ENCODE measurements at regions of chr11 and their contacts with region 1.

Region 1: DNA sequence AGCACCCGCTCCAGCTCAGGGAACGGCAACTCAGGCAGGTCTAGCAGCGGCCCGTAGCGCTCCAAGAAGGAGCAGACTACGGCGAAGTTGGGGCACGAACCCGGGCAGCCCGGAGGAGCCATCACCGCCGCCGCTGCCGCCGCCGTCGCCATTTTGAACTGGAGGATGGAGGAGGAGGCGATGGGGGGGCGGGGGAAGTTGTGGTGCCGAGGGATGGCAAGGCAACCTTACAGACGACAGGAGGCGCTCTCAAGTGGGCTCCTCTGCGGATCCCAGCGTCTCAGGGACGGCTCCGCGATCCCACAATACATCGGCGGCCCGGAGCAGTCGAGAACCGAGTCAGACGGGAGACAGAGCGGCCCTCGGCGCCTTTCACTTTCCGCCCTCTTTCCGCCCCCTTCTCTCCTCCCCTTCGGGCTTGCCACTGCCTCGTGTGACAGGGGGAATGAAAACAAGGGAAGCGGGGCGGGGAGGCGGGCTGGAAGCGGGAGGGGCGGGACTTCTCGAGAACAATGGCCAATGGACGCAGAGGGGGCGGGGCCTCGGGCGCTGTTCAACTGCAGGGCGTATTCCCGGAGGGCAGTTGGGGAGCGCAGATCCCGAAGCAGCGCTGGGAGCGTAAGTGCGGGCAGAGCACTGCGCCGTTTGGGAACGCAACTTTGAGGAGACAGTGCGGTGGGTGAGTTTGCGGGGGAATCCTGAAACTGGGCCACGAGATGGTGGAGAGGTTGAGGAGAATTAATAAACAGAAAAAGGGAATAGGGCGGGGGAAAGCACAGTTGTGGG is at the starts of genes AAMDC and RSF1:
- DNase-seq: peak; percentile 99
- H3K4me3 Mint-ChIP-seq: peak within 1 kb of the TSS; percentile 96
- H3K27ac Mint-ChIP-seq: peak within 1 kb of the TSS; percentile 97
- H3K4me1 Mint-ChIP-seq: peaks cover 29% of the 10 kb centered on the region
- H3K27me3 Mint-ChIP-seq: peaks cover 5% of the 10 kb centered on the region

Region 2: DNA sequence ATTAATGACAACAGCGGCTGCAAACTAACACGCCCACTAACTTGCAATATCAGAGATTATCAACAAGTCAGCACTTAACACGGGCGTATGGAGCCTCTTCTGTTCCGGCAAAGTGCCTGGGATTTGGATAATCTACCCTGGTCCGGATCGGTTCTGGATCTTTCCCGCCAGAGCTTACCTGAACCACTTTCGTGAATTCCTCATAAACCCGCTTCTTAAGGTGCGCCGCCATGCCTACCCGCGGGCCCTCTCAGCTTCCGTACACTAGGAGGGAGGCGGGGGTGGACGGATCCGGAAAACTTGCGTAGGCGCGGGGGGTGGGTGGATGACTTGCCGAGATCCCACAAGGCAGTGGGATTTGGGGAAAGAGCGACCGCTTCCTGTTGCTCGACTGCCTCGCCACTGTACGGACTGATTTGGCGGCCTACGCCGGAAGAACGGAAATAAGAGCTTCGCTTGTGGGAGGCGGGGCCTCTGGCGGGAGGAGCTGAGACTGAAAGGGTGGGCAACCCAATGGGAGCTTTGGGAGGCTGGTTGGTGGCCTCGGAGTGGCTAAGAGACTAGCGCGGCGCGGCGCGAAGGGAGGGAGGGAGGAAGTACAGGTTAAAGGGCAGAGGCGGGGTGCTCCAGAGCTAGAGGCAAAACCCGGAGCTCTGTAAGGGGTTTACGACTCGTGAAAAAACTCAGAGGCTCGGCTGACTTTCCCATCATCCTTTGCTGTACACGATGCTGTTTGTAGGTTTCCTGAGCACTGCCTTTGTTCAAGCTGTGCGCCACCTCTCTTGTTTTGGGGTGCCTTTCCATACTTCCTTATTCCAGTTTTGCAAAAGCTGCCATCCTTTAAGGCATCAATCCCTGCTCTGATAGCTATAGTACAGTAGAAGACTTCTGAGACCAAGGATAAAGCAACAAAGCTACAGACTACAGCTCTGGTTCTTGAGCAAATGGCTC is 173.9 kb after region 1 on chr11 and contains the start of gene INTS4:
- CTCF ChIA-PET with region 1: interaction called, 14 read pairs
- DNase-seq: peak; percentile 99
- H3K4me3 Mint-ChIP-seq: peak within 1 kb of the TSS; percentile 90
- H3K27ac Mint-ChIP-seq: peak within 1 kb of the TSS; percentile 92
- H3K4me1 Mint-ChIP-seq: peaks cover 20% of the 10 kb centered on the region
- H3K27me3 Mint-ChIP-seq: no peaks in the 10 kb centered on the region

Measured in activated naive CD4-positive, alpha-beta T cell treated with anti-CD3 and anti-CD28 coated beads, Interleukin-2, amount 10 ng/mL, durations not matched to agents 7 days and 5 days (primary cell).